ENCODE measurements at regions of chr12 and their contacts with region 1.

Region 1: DNA sequence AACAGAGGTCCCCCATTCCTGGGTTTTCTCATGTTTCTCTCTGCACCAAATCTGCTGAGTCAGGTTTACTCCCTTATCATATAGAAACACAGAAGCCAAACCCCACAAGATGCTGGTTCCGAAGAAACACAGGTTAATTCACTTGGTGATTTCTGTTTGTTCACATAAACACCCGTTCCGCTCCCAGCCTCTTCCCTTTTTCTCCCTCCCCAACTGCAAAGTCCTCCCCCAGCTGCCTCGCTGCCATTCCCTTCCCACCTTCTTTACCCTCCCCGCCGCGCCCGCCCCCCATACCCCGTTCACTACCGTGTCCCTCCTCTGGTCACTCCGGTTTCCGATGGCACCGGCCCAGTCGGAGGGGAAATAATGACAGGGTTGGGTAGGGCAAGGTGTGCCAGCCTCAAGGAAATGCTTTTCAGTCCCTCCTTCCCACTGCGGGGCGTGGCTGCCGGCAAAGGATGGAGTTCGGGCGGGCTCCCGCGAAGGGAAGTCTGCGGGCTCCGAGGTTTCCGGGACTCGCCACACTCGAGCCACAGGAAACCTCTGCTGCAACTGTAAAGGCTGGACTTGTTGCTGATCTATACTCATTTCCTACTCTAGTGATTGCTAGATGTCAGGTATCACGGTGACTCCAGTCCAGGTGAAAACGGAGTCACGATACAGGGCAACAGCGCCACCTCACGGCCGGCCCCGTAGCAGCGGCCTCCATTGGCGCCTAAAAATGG is at the start of gene STYK1:
- DNase-seq: peak; percentile 89 to 95
- H3K4me3 ChIP-seq: peak within 1 kb of the TSS; percentile 76
- H3K27ac ChIP-seq: peak within 1 kb of the TSS; percentile 77
- H3K4me1 ChIP-seq: peaks cover 11% of the 10 kb centered on the region; the same call in 1 of the 2 replicates
- H3K27me3 ChIP-seq: no peaks in the 10 kb centered on the region
- CTCF ChIP-seq: peak; percentile 99
- total RNA-seq, gene STYK1: 7.8 and 16.9 TPM in 2 replicates

Region 2: GRCh38 chr12:10153271-10154144 is 520.3 kb before region 1 on chr12:
- CTCF ChIA-PET with region 1: no interaction called
- POLR2A ChIA-PET with region 1: no interaction called
- intact Hi-C with region 1: loop called (anchors 1 kb)
- DNase-seq: peak; percentile 48 to 76
- H3K4me3 ChIP-seq: peak overlapping the region; percentile 62
- H3K27ac ChIP-seq: no peak overlapping the region
- H3K4me1 ChIP-seq: no peaks in the 10 kb centered on the region
- H3K27me3 ChIP-seq: no peaks in the 10 kb centered on the region
- CTCF ChIP-seq: peak; percentile 95

Region 3: DNA sequence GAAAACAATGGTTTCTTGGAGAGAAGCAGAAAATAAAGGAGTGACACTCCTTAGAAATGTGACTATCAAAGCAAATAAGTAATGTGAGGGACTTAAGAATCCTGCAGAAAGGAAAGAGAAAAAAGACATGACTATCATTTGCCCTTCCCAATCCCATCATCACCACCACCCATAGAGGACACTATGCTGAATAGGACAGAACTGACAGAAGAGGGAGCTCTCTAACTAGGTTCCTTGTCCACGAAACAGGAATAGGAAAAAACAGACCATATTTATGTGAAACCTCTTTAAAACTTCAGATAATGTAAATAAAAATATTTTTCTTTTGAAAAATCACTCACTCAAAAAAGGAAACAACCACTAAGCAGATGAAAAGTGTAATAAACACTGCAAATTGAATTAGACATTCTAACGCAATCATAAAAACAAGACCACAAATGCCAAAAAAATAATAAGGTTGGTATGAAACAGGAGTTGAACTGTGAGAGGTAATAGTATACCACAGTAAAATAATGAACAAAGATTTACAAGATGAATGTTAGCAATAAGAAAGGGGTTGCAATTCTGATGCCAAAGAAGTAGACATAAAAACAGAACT is 342.1 kb before region 1 on chr12:
- CTCF ChIA-PET with region 1: no interaction called
- POLR2A ChIA-PET with region 1: no interaction called
- intact Hi-C with region 1: loop called (anchors 1 kb)
- DNase-seq: peak in 1 of 2 experiments; percentile 19
- H3K4me3 ChIP-seq: no peak overlapping the region
- H3K27ac ChIP-seq: no peak overlapping the region
- H3K4me1 ChIP-seq: no peaks in the 10 kb centered on the region
- H3K27me3 ChIP-seq: no peaks in the 10 kb centered on the region
- CTCF ChIP-seq: peak; percentile 79

Region 4: DNA sequence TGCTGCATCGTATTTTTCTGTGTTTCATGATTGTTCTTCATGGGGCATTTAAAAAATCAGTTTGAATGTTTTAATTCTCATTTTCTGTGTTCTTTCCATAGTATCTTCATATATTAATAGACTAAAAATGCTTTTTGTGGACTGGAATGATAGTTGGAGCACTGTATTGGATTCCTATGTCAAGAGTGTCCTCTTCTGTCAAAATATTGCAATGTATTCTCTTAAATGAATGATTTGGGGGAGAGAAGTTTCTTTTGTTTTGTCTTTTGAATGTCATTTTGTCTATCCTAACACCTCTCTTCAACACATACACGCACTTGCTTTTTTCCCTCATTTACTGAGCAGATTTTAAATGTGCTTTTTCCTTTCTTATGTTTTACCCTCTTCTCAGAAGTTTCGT is 172.8 kb before region 1 on chr12:
- CTCF ChIA-PET with region 1: no interaction called
- POLR2A ChIA-PET with region 1: no interaction called
- intact Hi-C with region 1: loop called (anchors 1 kb)
- DNase-seq: no peak
- H3K4me3 ChIP-seq: no peak overlapping the region
- H3K27ac ChIP-seq: no peak overlapping the region
- H3K4me1 ChIP-seq: no peaks in the 10 kb centered on the region
- H3K27me3 ChIP-seq: no peaks in the 10 kb centered on the region
- CTCF ChIP-seq: peak; percentile 34; the same call in 1 of the 2 replicates

Region 5: DNA sequence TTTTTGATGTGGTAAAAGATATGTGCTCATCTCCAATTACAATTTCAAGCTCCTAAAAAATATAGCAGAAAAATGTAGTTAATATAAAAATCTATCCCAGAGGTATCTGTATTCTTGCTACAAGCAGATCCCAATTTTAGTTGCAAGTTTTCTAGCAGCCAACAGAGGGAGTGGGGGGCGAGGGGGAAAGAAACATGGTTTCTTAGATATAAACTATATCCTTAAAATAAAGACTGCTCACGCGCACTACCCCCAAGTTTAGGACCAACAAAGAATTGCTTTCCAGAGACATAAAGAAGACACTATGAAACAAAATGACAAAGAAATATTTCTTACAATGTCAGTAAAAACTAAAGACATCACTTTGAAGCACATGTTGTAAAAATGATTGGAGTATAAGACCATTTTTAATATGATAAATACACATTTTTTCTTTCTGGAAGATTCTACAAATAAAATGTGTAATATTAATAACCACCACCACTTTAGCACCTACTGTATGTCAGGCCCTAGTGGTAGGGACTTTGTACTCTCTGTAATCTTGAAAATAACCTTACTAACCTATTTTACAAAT is 65.8 kb before region 1 on chr12:
- CTCF ChIA-PET with region 1: no interaction called
- POLR2A ChIA-PET with region 1: no interaction called
- intact Hi-C with region 1: loop called (anchors 1 kb)
- DNase-seq: no peak
- H3K4me3 ChIP-seq: no peak overlapping the region
- H3K27ac ChIP-seq: no peak overlapping the region
- H3K4me1 ChIP-seq: 0 out of 2 replicates have a peak, but pooled peaks cover 11% of the 10 kb centered on the region
- H3K27me3 ChIP-seq: no peaks in the 10 kb centered on the region
- CTCF ChIP-seq: peak; percentile 56

Region 6: DNA sequence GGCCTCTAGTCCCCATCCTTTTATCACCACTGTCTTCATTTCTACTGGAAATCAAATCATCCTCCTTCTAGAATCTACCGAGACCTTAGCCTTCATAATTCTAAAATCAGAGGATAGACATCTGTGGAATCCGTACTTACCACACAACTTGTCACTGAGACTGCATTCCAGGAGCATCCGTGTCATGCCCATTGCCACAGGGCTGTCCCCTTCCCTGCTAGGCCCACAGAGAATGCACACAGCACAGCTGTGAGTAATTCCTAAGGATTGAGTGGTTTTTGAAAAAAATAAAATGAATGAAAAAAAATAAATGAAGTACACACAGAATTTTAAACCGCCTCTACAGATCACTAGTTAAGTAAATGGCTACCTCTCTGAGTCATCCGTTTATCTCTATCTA is 39.4 kb before region 1 on chr12:
- CTCF ChIA-PET with region 1: no interaction called
- POLR2A ChIA-PET with region 1: no interaction called
- intact Hi-C with region 1: loop called (anchors 1 kb)
- DNase-seq: peak; percentile 86 to 89
- H3K4me3 ChIP-seq: no peak overlapping the region
- H3K27ac ChIP-seq: peak overlapping the region; percentile 35
- H3K4me1 ChIP-seq: peaks cover 36% of the 10 kb centered on the region
- H3K27me3 ChIP-seq: no peaks in the 10 kb centered on the region
- CTCF ChIP-seq: no peak

Region 7: GRCh38 chr12:10749700-10750384 is 76.0 kb after region 1 on chr12:
- CTCF ChIA-PET with region 1: interaction called, 3 read pairs
- POLR2A ChIA-PET with region 1: no interaction called
- intact Hi-C with region 1: loop called (anchors 1 kb)
- DNase-seq: peak; percentile 83 to 85
- H3K4me3 ChIP-seq: peak overlapping the region; percentile 48
- H3K27ac ChIP-seq: no peak overlapping the region
- H3K4me1 ChIP-seq: no peaks in the 10 kb centered on the region
- H3K27me3 ChIP-seq: no peaks in the 10 kb centered on the region
- CTCF ChIP-seq: peak; percentile 93

Measured in PC-9 (cell line).